Motor neuron (in vitro differentiated cells): ENCODE measurements at regions of chr9 and their contacts with region 1.

Region 1: DNA sequence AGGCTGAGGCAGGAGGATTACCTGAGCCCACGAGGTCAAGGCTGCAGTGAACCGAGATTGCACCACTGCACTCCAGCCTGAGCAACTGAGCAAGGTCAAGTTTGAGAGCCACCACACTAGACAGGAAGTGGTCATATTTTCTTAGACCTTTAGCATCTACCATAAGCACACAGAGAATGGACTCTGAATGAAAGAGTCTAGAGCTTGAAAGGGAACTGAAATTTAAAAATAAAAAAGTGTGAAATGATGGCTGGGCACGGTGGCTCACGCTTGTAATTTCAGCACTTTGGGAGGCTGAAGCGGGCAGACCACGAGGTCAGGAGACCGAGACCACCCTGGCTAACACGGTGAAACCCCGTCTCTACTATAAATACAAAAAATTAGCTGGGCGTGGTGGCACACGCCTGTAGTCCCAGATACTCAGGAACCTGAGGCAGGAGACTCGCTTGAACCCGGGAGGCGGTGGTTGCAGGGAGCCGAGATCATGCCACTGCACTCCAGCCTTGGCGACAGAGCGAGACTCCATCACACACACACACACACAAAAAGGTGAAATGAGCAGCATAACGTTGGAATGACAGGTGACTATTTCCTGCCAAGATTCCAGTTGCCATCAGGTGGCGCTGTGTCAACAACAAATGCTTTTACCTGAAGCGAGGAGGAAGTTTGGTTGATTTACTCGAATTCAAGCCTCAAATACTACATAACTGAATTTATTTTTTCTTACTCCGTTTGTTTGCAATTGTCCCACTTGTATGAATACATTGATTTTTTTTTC is 21.3 kb upstream of the AK3 start:
- ATAC-seq: peak; percentile 40 to 74 (median 50)
- H3K4me3 ChIP-seq: no peak overlapping the region
- H3K27ac ChIP-seq: no peak overlapping the region
- H3K4me1 ChIP-seq: peaks cover 10 to 15% of the 10 kb centered on the region in 2 donors

Region 2: DNA sequence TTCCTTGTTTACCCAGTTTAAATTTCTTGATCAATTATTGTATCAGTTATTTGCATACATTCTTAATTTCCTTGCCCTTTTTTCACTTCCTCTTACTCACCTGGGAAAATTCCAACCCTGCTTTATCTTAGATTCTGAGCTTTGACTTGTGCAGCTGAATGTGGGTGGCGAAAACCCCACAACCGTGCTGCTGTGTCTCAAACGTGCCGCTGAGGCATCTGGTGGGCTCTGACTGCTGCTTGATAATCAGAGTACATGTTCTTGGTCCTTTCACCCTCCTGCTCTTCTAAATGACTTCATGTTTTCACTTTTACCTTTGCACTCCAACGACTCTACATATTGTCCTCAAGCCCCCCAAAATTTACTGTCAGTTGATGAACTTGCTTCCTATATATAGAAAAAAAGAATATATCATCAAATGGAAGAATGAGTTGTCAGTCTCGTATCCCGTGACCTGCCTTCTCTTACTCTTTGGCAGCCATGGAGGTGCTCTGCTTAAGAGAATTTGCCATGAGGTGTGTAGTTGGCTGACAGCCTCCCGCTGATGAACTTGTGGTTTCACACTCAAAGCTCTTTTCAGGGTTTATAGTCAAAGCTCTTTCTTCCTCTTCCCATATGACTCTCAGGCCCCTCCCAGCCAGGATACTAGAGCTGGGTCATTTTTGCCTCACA is 208.8 kb after region 1 on chr9:
- in situ Hi-C with region 1: loop called in 3 of 9 experiments (anchors 10 to 25 kb)
- ATAC-seq: no peak
- H3K4me3 ChIP-seq: no peak overlapping the region
- H3K27ac ChIP-seq: no peak overlapping the region
- H3K4me1 ChIP-seq: no peaks in the 10 kb centered on the region

Region 3: GRCh38 chr9:4984621-4985385 is 222.5 kb after region 1 on chr9 and contains the start of gene JAK2:
- in situ Hi-C with region 1: loop called in 2 of 9 experiments (anchors 25 kb)
- ATAC-seq: peak; percentile 88 to 91 (median 90)
- H3K4me3 ChIP-seq: peak within 1 kb of the TSS; percentile 40 to 70 (median 53)
- H3K27ac ChIP-seq: peak within 1 kb of the TSS; percentile 83 to 94
- H3K4me1 ChIP-seq: peaks cover 9 to 13% of the 10 kb centered on the region in 2 donors
- total RNA-seq, gene JAK2: 6.5 to 28.2 (median 9.8) TPM

Region 4: GRCh38 chr9:5186416-5187169 is 424.3 kb after region 1 on chr9:
- in situ Hi-C with region 1: loop called in 1 of 9 experiments (anchors 25 kb)
- ATAC-seq: peak in 5 of 8 experiments; percentile 41 to 94 (median 83)
- H3K4me3 ChIP-seq: no peak overlapping the region
- H3K27ac ChIP-seq: no peak overlapping the region
- H3K4me1 ChIP-seq: no peaks in the 10 kb centered on the region

Region 5: GRCh38 chr9:5437254-5438216 is 675.2 kb after region 1 on chr9 and contains the start of gene PLGRKT:
- in situ Hi-C with region 1: loop called in 1 of 9 experiments (anchors 25 kb)
- ATAC-seq: peak; percentile 85 to 99 (median 98)
- H3K4me3 ChIP-seq: peak within 1 kb of the TSS; percentile 48 to 84 (median 53)
- H3K27ac ChIP-seq: peak within 1 kb of the TSS; percentile 50 to 78
- H3K4me1 ChIP-seq: peaks cover 11 to 13% of the 10 kb centered on the region in 2 donors
- total RNA-seq, gene PLGRKT: 21.5 to 32.0 (median 26.1) TPM

Region 6: GRCh38 chr9:5582835-5583195 is 820.5 kb after region 1 on chr9:
- in situ Hi-C with region 1: loop called in 3 of 9 experiments (anchors 25 kb)
- ATAC-seq: peak in 5 of 8 experiments; percentile 41 to 79 (median 69)
- H3K4me3 ChIP-seq: no peak overlapping the region
- H3K27ac ChIP-seq: no peak overlapping the region
- H3K4me1 ChIP-seq: no peaks in the 10 kb centered on the region